HEK293T (cell line): ENCODE measurements at regions of chr1 and their contacts with region 1.

Region 1: DNA sequence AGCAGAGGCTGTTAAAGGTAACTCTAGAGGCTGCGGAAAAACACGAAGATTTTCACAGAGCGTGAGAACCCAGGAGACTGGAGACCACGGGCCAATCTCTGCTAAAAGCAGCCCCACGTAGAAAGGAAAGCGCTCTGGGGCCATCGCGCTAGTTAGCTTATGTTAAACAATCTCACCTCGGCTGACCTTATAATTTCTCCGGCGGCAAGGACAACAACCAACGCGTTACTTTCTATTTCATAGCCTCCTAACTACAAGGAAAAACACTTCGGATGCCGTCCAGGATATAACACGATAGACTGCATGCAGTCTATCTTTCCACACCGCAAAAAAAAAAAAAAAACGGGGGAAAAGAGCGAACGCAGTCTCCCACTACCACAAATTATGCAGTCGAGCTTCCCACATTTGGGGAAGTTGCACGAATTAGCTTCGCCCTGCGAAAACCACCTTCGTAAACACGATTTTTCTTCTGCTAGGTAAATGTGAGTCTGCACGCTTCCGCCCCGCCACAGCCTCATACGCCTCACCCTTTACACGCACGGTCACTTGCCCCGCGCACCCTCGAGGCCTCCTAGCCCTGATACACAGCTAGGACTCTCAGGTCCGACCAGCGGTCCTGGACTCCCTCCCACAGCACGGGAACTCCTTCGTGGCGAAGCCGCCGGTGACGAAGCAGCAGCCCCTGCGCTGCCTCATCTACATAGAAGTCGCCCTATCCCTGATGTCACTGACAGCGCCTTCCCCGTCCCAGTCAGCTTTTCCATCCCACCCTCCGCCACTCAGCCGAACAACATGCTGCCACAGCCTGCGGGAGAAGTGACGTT is 87.8 kb downstream of the PRKAB2 start:
- DNase-seq: peak; percentile 92

Region 2: GRCh38 chr1:147167361-147167760 is 82.9 kb after region 1 on chr1:
- CTCF ChIA-PET with region 1: no interaction called
- POLR2A ChIA-PET with region 1: interaction called, 14 read pairs
- DNase-seq: no peak

Region 3: GRCh38 chr1:147242439-147243227 is 158.1 kb after region 1 on chr1 and contains the start of gene CHD1L:
- CTCF ChIA-PET with region 1: interaction called, 4 read pairs
- POLR2A ChIA-PET with region 1: interaction called, 11 read pairs
- DNase-seq: peak; percentile 93

Region 4: DNA sequence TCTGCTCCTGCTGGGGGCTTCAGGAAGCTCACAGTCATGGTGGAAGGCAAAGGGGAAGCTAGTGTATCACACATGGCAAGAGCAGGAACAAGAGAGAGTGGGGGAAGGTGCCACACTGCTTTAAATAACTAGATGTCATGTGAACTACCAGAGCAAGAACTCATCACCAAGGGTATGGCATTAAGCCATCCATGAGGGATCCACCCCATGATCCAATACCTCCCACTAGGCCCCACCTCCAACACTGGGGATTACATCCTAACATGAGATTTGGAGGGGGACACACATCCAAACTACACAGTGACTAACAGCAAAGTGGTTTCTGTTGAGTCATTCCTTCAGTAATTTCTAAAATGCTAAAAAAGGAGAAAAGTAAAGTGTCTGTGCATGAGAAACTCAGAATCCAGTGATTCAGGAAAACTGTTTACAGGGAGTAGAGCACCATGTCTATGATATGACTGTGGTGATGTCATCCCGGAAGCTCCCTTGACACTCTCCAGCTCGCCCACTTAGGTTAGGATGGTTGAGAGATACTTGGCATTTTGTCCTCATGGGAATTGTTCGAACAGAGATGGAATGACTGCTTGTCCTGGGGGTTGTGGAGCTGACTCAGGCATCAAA is 208.3 kb after region 1 on chr1:
- CTCF ChIA-PET with region 1: no interaction called
- POLR2A ChIA-PET with region 1: no interaction called
- DNase-seq: no peak